Left colon (tissue), 2 donors: ENCODE measurements at regions of chr19 and their contacts with region 1.

Region 1: GRCh38 chr19:44653977-44654774 is 10.5 kb downstream of the PVR start:
- DNase-seq: peak; percentile 77 to 86
- ATAC-seq: peak; percentile 85

Region 2: DNA sequence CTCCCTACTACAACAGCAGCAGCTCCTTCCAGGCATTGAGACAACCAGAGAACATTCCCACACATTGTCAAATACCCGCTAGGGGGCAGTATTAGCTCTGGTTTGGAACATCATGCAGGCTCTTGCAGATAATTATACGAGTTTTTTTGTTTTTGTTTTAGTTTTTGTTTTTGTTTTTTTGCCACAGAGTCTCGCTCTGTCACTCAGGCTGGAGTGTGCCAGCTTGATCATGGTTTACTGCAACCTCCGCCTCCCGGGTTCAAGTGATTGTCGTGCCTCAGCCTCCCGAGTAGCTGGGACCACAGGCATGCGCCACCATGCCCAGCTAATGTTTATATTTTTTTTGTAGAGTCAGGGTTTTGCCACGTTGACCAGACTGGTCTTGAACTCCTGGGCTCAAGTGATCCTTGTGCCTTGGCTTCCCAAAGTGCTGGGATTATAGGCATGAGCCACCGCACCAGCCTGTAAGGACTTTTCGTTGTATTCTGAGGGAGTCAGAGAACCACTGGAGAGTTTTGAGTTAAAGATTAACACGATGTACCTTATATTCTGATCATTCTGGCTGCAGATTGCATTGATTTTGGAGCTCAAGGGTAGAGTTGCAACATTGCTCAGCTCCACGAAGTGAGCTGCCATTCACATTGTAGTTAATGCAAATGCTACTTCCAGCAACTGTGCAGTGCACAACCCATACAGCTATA is 83.0 kb before region 1 on chr19:
- intact Hi-C with region 1: loop called (anchors 5 to 10 kb)
- DNase-seq: peak in 1 of 2 donors; percentile 61
- ATAC-seq: peak; percentile 83

Region 3: DNA sequence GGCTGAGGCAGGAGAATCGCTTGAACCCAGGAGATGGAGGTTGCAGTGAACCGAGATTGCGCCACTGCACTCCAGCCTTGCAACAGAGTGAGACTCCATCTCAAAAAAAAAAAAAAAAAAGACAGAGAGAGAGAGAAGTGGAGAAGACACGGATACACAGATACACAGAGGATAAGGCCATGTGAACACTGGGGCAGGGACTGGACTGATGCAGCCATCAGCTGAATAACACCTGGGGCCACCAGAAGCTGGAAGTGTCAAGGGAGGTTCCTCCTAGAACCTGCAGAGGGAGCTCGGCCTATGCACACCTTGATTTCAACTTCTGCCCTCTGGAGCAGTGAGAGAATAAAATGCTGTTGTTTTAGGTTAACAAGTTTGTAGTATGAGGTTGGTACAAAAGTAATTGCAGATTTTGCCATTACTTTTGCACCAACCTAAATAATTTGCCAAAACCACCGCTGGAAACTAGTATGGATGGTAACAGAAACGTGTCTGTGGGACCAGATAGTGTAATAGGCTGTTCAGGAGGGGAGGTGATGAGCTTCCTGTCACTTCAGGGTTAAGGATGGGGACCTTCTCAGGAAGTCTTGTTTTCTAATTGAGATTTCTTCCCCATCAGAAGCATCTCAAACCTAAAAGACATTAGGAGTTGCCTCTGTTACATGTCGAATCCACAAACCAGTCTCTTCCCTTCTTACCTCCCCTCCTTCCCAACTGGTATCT is 77.2 kb before region 1 on chr19:
- intact Hi-C with region 1: loop called (anchors 5 to 10 kb)
- DNase-seq: peak in 1 of 2 donors; percentile 56
- ATAC-seq: peak; percentile 68

Region 4: GRCh38 chr19:44694184-44694579 is 40.0 kb after region 1 on chr19:
- intact Hi-C with region 1: no loop called
- DNase-seq: peak in 1 of 2 donors; percentile 34
- ATAC-seq: no peak